Mucosa of descending colon (tissue), 3 donors: ENCODE measurements at regions of chr5 and their contacts with region 1.

Region 1: DNA sequence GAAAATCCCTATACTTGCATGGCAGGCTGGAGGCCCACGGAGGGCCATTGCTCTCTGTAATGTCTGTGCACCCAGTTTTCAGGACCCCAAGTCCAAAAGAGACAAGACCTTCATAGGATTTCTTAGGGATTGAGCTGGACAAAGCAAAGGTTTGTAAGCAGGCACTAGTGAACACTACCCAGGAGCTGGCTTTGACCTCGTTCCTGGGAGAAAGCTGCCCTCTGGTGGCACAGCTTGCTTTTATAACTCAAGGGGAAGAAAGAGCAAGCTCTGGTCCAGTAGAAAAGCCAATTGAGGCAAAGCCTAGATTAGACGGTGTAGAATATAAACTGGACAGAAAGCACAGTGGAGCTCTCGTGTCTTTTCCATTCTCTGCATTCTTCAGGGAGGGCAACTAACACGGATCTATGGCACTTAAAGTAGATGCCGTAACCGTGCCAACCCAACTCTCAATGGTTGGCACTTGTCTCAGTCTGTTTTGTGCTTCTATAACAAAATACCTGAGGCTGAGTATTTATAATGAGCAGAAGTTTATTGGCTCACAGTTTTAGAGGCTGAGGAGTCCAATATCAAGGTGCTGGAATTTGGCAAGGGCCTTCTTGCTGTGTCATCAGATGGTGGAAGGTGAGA is 7.9 kb downstream of the GABRP start:
- DNase-seq: peak in 2 of 3 donors; percentile 73 to 90
- ATAC-seq: peak; percentile 89
- H3K4me3 ChIP-seq: no peak overlapping the region
- H3K4me1 ChIP-seq: no peaks in the 10 kb centered on the region
- CTCF ChIP-seq: no peak

Region 2: GRCh38 chr5:170745481-170746071 is 45.9 kb before region 1 on chr5:
- intact Hi-C with region 1: loop called in 1 of 2 experiments (anchors 2 kb)
- DNase-seq: peak; percentile 31 to 72 (median 50)
- ATAC-seq: peak; percentile 72
- H3K4me3 ChIP-seq: no peak overlapping the region
- H3K4me1 ChIP-seq: peaks cover 19% of the 10 kb centered on the region
- CTCF ChIP-seq: no peak